Esophagus muscularis mucosa (tissue), 4 donors: ENCODE measurements at regions of chr14 and their contacts with region 1.

Region 1: GRCh38 chr14:32939254-32940065 is 781 bp downstream of the NPAS3 start:
- DNase-seq: no peak
- H3K4me3 ChIP-seq: peak overlapping the region; percentile 70 to 96 (median 76)
- H3K27ac ChIP-seq: peak overlapping the region; percentile 90 to 94 (median 94)
- H3K4me1 ChIP-seq: peaks cover 15 to 36% (median 31%) of the 10 kb centered on the region in 4 donors
- H3K27me3 ChIP-seq: peaks cover 0 to 6% (median 1%) of the 10 kb centered on the region in 4 donors
- CTCF ChIP-seq: no peak
- EP300 ChIP-seq: no peak
- POLR2A ChIP-seq: no peak

Region 2: GRCh38 chr14:32576088-32576795 is 363.2 kb before region 1 on chr14:
- intact Hi-C with region 1: loop called (anchors 2 kb)
- DNase-seq: no peak
- H3K4me3 ChIP-seq: peak overlapping the region; percentile 29 to 42 (median 37)
- H3K27ac ChIP-seq: peak overlapping the region in 2 of 4 donors; percentile 8 to 10
- H3K4me1 ChIP-seq: peaks cover 16 to 34% (median 29%) of the 10 kb centered on the region in 4 donors
- H3K27me3 ChIP-seq: no peaks in the 10 kb centered on the region
- CTCF ChIP-seq: peak; percentile 93 to 98 (median 93)
- EP300 ChIP-seq: no peak
- POLR2A ChIP-seq: no peak

Region 3: DNA sequence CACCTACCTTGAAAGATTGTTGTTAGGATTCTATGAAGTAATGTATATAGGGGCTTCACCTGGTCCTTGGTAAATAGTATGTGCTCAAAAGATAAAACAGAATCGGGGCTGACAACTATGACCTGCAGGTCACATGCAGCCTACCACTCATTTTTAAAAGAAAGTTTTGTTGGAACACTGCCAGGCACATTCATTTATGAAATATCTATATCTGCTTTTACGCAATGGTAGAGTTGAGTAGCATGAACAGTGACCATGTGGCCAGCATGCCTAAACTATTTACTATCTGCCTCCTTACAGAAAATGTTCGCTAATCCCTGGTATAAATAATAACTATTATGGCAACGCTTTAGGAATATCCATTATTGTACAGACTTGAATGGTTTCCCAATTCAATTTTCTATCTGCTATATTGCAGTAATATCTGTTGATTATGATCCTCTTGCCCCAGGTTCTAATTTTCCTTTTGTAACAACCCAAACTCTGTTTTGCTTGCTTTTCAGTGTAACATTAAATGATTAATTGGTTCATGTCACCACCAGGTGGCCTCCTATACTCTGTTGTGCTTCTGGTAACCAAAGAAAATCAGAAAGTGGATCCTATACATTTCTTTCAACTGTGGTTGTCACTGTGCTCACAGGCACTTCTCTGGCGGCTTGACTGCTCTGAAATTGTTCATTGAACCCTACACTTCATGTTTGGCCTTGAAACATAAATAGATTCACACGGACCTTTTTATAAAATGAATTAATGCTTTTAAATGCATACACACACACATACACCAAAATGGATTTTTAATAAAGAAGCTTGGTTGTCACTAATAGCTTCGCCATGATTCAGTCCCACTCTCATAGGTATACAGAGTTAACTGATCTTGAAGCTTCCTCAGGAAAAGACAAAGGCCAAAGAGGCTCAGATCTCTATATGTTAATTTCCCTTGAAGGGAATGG is 228.5 kb before region 1 on chr14:
- intact Hi-C with region 1: loop called (anchors 10 kb)
- DNase-seq: no peak
- H3K4me3 ChIP-seq: peak overlapping the region; percentile 36 to 43 (median 38)
- H3K27ac ChIP-seq: peak overlapping the region; percentile 72 to 80 (median 74)
- H3K4me1 ChIP-seq: peaks cover 15 to 51% (median 43%) of the 10 kb centered on the region in 4 donors
- H3K27me3 ChIP-seq: no peaks in the 10 kb centered on the region
- CTCF ChIP-seq: peak; percentile 39 to 55 (median 43)
- EP300 ChIP-seq: no peak
- POLR2A ChIP-seq: no peak

Region 4: DNA sequence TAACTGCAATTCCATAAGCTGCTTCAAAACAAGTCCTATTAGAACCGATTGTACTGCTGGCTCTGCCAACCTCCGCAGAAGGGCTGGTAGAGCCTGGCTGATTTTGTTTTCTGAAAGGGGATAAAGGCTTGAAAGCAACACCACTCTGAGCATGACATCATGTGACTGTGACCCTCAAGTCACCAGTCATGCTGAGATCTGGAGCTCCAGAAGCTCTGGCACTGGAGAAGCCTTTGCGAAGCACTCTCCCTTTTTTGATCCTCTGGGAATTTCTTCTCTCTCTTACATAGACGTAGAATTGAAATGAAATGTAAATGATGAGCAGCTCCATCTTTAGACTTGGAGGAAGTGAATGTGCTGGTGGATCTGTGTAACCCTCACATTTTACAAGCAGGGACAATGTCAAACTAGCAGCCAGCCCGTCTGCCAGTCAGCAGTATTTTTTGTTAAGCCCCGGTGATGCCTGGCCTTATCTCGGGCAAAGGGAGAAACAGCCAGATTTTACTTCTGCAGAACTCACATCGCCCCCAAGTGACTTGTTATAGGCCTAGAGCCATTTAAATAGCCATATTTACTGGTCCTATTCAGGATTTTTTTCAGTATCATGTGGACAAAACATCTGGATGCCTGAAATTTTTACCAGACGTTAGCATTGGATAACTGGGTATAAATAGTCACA is 112.9 kb before region 1 on chr14:
- intact Hi-C with region 1: loop called (anchors 5 kb)
- DNase-seq: no peak
- H3K4me3 ChIP-seq: no peak overlapping the region
- H3K27ac ChIP-seq: no peak overlapping the region
- H3K4me1 ChIP-seq: peaks cover 0 to 19% (median 7%) of the 10 kb centered on the region in 4 donors
- H3K27me3 ChIP-seq: no peaks in the 10 kb centered on the region
- CTCF ChIP-seq: no peak
- EP300 ChIP-seq: no peak
- POLR2A ChIP-seq: no peak

Region 5: GRCh38 chr14:33792720-33793368 is 853.4 kb after region 1 on chr14:
- intact Hi-C with region 1: loop called (anchors 5 kb)
- DNase-seq: peak; percentile 94
- H3K4me3 ChIP-seq: peak overlapping the region; percentile 32 to 41 (median 37)
- H3K27ac ChIP-seq: peak overlapping the region in 3 of 4 donors; percentile 33 to 54 (median 44)
- H3K4me1 ChIP-seq: peaks cover 0 to 28% (median 16%) of the 10 kb centered on the region in 4 donors
- H3K27me3 ChIP-seq: no peaks in the 10 kb centered on the region
- CTCF ChIP-seq: peak; percentile 89 to 96 (median 94)
- EP300 ChIP-seq: no peak
- POLR2A ChIP-seq: no peak